Activated CD4-positive, alpha-beta memory T cell treated with anti-CD3 and anti-CD28 coated beads, Interleukin-2, amount 10 ng/mL, durations not matched to agents 7 days and 5 days (primary cell): ENCODE measurements at regions of chr17 and their contacts with region 1.

Region 1: DNA sequence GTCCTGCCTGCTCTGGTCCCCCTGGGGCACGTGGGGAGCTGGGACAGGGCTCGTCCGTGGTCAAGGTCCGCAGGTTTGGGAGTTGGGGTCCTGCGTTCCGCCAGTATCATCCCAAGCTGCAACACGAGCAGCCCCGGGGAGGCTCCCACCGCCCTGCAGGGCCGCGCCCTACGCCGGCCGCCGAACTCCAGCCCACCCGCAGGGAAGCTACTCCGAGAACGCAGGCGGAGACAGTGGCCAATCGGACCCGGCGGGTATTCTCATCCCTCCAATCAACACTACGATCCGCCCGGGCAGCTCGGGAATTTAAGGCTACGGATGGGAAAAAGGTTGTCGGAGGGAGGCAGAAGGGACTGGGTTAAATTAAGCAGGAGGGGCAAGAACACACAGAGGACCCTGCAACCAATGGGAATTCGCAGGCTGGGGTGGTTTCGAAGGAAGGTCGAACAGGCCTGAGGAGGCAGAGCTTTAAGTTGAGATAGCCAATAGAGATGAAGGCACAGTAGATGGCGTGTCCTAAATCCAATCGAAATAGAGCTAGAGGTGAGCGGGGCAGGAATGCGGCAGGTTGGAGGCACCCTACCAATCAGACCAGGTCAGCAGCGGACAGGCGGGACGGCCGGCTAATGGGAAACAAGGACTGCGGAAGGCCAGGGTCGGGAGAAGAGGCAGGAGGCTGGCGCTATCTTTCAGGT is 626 bp downstream of the SPAG7 start:
- DNase-seq: peak; percentile 97
- H3K4me3 Mint-ChIP-seq: no peak overlapping the region
- H3K27ac Mint-ChIP-seq: no peak overlapping the region
- H3K4me1 Mint-ChIP-seq: peaks cover 25% of the 10 kb centered on the region
- H3K27me3 Mint-ChIP-seq: no peaks in the 10 kb centered on the region

Region 2: DNA sequence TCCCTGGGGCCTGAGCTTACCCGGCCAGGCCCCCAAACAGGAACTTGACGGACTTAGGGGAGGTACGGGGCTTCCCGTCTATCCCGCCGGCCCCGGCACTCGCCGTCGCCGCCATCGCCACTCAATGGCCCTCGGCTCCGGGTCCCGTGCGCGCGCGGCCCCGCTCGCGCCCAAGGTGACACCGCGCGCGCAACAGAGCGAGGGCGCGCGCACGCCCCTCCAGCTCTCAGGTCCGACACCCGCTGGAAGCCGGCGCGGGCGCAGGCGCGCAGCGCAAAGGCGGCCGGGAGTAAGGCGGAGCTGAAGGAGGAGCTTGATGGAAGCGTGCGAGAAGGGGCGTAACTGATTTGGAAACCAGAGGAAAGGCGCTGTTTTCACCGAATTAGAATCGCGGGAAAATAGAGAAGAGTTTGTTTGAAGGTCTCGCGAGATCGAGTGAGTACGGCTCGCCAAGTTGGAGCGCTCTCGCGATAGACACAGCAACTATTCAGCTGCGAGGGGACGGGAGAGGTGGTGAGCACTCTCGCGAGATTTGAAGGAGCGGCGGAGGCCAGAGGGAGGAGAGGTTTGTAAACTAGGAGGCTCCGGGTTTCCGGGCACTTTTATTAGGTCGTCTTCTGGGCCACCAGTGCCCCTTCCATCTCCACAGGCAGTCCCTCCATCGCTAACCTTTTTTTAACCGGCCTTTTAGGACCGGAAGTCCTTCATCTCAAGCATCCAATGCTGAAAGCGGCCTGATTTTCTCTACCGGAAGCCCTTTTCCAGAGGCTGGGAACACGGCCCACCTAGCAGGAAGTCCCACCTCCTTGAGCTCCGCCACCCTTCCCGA is 27.0 kb before region 1 on chr17 and contains the starts of genes RNF167 and SLC25A11:
- CTCF ChIA-PET with region 1: interaction called, 12 read pairs
- POLR2A ChIA-PET with region 1: interaction called, 711 read pairs
- DNase-seq: peak; percentile 98
- H3K4me3 Mint-ChIP-seq: peak within 1 kb of the TSS; percentile 96
- H3K27ac Mint-ChIP-seq: peak within 1 kb of the TSS; percentile 100
- H3K4me1 Mint-ChIP-seq: peaks cover 61% of the 10 kb centered on the region
- H3K27me3 Mint-ChIP-seq: no peaks in the 10 kb centered on the region
- total RNA-seq, gene RNF167: 249 to 261 TPM
- total RNA-seq, gene SLC25A11: 62.8 to 71.0 TPM

Region 3: GRCh38 chr17:4956493-4957061 is 10.4 kb before region 1 on chr17:
- CTCF ChIA-PET with region 1: interaction called, 17 read pairs
- POLR2A ChIA-PET with region 1: interaction called, 711 read pairs
- DNase-seq: peak; percentile 60
- H3K4me3 Mint-ChIP-seq: no peak overlapping the region
- H3K27ac Mint-ChIP-seq: no peak overlapping the region
- H3K4me1 Mint-ChIP-seq: peaks cover 8% of the 10 kb centered on the region
- H3K27me3 Mint-ChIP-seq: no peaks in the 10 kb centered on the region

Region 4: GRCh38 chr17:4986951-4987766 is 20.2 kb after region 1 on chr17 and contains the start of gene CAMTA2:
- CTCF ChIA-PET with region 1: interaction called, 22 read pairs
- POLR2A ChIA-PET with region 1: interaction called, 78 read pairs
- DNase-seq: peak; percentile 89
- H3K4me3 Mint-ChIP-seq: peak within 1 kb of the TSS; percentile 88
- H3K27ac Mint-ChIP-seq: peak within 1 kb of the TSS; percentile 88
- H3K4me1 Mint-ChIP-seq: peaks cover 40% of the 10 kb centered on the region
- H3K27me3 Mint-ChIP-seq: no peaks in the 10 kb centered on the region
- total RNA-seq, gene CAMTA2: 73.2 to 80.1 TPM

Region 5: DNA sequence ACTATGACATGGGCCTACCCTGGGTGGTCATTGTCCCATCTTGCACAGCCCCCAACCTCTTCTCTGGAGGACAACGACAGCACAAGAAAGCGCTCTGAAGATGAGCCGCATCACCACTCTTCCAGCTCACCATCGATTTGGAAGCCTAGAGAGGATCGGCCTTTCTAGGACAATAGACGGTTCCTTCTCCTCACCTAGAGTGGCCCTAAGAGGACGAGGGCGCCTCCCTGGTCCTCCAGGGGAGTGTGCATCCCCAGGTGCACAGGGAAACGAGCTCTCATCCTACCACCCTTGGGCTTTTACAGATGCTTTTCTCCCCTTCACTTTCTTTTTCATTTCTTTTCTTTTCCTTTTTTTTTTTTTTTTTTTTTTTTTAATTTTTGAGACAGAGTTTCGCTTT is 88.6 kb after region 1 on chr17:
- CTCF ChIA-PET with region 1: no interaction called
- POLR2A ChIA-PET with region 1: no interaction called
- DNase-seq: no peak
- H3K4me3 Mint-ChIP-seq: no peak overlapping the region
- H3K27ac Mint-ChIP-seq: no peak overlapping the region
- H3K4me1 Mint-ChIP-seq: peaks cover 2% of the 10 kb centered on the region
- H3K27me3 Mint-ChIP-seq: no peaks in the 10 kb centered on the region